ENCODE measurements at regions of chr4 and their contacts with region 1.

Region 1: DNA sequence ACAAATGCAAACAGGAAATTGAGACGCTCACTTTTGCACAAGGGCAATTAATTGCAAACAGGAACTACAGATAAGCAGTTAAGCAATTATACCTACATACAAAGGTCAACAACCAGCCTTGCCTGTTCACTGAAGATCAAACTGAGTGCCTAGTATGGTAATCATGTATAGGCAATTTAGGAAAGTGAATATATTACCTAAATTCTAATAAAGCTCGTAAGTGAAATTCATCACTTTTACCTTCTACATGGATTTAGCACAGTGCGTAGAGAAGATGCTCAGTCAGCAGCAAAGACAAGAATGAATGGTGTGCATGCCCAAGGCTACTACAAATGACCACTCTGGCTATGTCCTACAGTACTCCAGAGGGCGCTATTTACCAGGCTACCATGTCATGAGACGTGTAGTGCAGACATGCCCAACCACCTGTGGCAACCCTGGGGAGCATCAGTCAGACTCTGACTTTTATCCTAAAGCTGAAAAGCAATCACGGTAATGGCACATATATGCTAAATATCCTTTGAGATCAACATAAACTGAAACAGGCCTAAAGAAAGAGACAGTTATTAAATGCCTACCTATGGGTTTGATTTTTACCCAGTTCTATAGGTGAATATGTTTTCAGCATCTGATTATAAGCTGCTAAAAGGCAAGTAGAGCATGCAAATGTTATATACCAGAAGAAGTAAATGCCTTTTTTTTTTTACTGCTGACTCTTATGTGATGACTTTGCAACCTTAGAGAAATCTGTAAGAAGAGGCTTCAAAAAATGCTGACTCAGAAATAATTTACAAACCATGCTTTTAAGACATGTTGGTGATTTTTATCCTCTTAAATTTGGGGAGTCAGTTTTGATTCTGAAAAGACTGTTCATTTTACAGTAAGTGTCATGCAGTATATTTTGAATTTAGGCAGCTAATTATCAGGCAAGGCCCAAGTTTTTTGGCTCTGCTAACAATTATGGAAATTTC is 178.0 kb downstream of the PPP3CA start:
- DNase-seq: peak; percentile 60
- H3K4me3 ChIP-seq: no peak overlapping the region
- H3K27ac ChIP-seq: no peak overlapping the region
- H3K4me1 ChIP-seq: no peaks in the 10 kb centered on the region
- H3K27me3 ChIP-seq: no peaks in the 10 kb centered on the region
- CTCF ChIP-seq: peak; percentile 49 to 71
- POLR2A ChIP-seq: no peak

Region 2: DNA sequence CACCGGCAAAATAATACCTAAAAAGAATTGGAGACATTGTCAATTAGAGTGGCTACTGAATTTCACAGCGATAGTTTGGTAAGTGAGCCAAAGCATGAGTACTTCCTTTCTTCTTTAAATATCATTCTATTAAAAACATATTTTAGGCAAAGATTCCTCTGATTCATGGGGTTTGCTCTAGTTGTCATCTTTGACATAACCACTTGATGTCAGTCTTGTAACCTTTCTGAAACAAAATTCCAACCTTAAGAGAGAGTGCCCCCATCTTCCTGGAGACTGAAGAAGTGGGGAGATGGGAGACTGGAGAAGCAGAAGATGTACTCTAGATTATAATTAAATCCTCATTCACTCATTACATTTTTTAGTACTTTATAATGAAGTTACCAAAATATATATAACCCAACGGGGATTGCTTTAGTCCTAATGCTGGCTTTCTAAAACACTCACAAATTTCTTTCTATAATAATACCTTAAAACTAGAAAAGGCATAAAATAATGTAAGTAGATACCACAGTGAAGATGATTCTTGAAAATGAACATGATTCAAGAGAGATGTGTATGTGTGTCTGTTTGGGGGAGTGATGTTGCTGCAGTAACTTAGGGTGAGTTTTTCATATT is 747.9 kb before region 1 on chr4:
- CTCF ChIA-PET with region 1: no interaction called
- POLR2A ChIA-PET with region 1: no interaction called
- dilution Hi-C with region 1: no loop called
- intact Hi-C with region 1: loop called (anchors 2 kb)
- DNase-seq: peak; percentile 73
- H3K4me3 ChIP-seq: no peak overlapping the region
- H3K27ac ChIP-seq: peak overlapping the region; percentile 43
- H3K4me1 ChIP-seq: peaks cover 18% of the 10 kb centered on the region
- H3K27me3 ChIP-seq: no peaks in the 10 kb centered on the region
- CTCF ChIP-seq: peak; percentile 30 to 44
- POLR2A ChIP-seq: no peak

Region 3: DNA sequence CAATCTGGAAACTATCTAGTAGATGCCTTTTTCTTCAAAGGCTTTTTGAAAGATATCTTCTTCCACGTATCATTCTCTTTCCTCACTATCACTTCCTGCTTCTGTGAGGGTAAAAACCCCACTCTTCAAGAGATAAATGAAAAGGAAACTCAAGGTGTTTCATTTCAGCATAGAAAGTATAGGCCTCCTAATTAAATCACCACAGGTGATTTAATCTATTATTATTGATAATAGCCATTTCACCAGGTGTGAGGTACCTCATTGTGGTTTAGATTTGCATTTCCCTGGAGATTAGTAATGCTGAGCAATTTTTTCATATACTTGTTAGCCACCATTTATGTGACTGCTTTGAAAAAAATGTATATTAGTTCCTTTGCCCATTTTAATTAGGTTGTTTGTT is 559.5 kb before region 1 on chr4:
- CTCF ChIA-PET with region 1: no interaction called
- POLR2A ChIA-PET with region 1: no interaction called
- dilution Hi-C with region 1: no loop called
- intact Hi-C with region 1: no loop called
- DNase-seq: no peak
- H3K4me3 ChIP-seq: no peak overlapping the region
- H3K27ac ChIP-seq: no peak overlapping the region
- H3K4me1 ChIP-seq: no peaks in the 10 kb centered on the region
- H3K27me3 ChIP-seq: no peaks in the 10 kb centered on the region
- CTCF ChIP-seq: no peak
- POLR2A ChIP-seq: no peak

Region 4: DNA sequence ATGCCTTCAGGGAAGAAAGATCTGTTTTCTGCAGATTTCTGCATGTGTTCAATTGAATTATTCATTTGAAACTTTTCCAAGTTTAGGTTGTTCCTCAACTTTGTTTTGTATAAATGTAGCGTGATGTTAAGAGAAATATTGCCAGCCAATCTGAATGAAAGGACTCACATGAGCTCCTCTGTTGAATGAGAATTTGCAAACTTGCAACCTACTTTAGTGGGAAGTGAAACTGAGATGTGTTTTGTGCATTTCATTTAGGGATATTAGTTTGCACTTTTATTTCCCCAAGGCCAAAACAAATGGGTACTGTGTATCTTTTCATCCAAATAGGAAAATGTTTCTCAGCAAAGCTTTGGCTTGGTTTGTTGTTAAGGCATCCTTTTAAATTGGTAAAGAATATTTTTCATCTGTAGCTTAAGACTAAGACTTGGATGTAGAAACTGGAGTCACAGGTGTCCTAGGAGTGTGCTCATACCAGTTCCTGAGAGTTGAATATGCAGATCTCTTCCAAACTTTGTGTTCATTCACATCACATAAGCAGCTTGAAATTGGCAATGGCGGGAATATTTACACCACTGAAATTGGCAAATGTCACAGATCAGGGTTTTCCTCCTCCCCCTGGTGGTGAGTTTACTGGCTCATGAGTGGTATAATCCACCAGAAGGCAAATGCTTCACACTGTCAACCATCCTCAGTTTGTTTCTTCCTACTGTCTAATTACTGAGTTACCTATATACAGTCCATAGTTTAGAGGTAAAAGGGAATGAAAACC is 427.6 kb after region 1 on chr4:
- CTCF ChIA-PET with region 1: no interaction called
- POLR2A ChIA-PET with region 1: no interaction called
- dilution Hi-C with region 1: no loop called
- intact Hi-C with region 1: loop called (anchors 1 kb)
- DNase-seq: no peak
- H3K4me3 ChIP-seq: no peak overlapping the region
- H3K27ac ChIP-seq: no peak overlapping the region
- H3K4me1 ChIP-seq: no peaks in the 10 kb centered on the region
- H3K27me3 ChIP-seq: no peaks in the 10 kb centered on the region
- CTCF ChIP-seq: peak in 1 of 2 donors; percentile 3
- POLR2A ChIP-seq: no peak

Region 5: DNA sequence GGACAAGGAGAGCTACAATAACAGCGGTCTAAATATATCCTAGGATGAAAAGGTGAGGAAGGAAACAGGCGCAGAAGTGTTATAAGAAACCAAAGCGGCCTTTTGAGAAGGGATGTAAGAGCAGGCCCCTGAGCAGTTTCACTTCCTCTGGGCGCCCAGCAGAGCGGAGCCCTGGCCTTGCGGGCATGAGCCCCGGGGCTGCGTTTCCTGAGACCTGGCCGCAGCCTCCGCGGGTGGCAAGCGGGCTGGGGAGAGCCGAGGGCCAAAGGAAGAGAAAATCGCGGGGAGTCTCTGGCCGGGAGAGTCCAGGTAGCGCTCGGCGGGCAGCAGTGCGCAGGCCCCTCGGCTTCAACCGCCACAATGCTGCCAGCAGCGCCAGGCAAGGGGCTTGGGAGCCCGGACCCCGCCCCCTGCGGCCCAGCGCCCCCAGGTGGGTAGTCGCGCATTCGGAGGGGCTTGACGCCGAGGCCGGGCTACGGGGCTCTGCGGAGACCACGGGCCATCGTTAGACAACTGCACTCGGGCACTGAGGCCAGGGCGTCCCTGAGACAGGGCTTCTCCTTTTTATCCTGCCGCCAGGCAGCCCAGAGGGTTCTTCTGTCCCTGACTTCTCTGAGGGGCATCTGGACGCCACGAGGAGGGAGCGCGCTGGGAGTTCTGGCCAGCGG is 621.3 kb after region 1 on chr4 and contains the start of gene BANK1:
- CTCF ChIA-PET with region 1: no interaction called
- POLR2A ChIA-PET with region 1: no interaction called
- dilution Hi-C with region 1: no loop called
- intact Hi-C with region 1: loop called (anchors 5 kb)
- DNase-seq: peak; percentile 62
- H3K4me3 ChIP-seq: peak within 1 kb of the TSS; percentile 30 to 65 (median 32)
- H3K27ac ChIP-seq: no peak within 1 kb of the TSS
- H3K4me1 ChIP-seq: peaks cover 4% of the 10 kb centered on the region
- H3K27me3 ChIP-seq: no peaks in the 10 kb centered on the region
- CTCF ChIP-seq: peak; percentile 25 to 67
- POLR2A ChIP-seq: no peak
- total RNA-seq, gene BANK1: 0.29 and 0.60 TPM in 2 replicates

Region 6: GRCh38 chr4:102263011-102263787 is 1093.9 kb after region 1 on chr4:
- CTCF ChIA-PET with region 1: interaction called, 20 read pairs
- POLR2A ChIA-PET with region 1: no interaction called
- dilution Hi-C with region 1: no loop called
- intact Hi-C with region 1: loop called (anchors 1 kb)
- DNase-seq: peak; percentile 64
- H3K4me3 ChIP-seq: no peak overlapping the region
- H3K27ac ChIP-seq: no peak overlapping the region
- H3K4me1 ChIP-seq: peaks cover 4% of the 10 kb centered on the region
- H3K27me3 ChIP-seq: no peaks in the 10 kb centered on the region
- CTCF ChIP-seq: peak; percentile 42 to 52
- POLR2A ChIP-seq: no peak

Measured in endothelial cell of umbilical vein (primary cell).